Gastrocnemius medialis (tissue), 4 donors: ENCODE measurements at regions of chr3 and their contacts with region 1.

Region 1: DNA sequence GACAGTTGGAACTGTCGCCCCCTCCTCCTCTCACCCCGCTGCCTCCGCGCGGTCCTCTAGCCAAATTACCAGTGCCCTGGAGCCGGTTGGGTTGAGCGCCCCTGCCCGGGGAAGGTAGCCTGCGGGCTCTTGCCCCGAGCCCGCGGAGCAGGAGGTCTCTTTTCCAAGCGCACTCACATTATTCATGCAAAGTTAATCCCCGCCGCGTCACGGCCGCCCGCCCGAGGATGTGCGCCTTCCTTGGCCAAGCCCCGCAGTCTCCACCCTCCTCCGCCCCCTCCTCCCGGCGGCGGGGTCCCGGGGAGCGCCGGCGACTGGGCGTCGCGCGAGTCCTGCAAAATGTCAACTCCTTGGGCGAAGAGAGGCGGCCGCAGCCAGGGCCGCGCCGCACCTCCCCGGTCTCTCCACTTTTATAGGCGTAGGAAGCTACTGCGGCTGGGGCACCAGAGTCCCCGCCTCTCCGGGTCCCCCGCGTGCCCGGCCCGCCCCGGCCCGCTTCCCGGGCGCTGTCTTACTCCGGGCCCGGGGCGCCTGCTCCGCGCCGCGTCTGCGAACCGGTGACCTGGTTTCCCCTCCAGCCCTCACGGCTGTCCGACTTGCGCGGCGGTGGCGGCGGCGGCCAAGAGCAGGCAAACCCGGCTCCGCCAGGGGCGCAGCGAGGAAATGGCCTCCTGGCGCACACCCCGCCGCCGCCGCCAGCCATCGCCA is at the start of gene THRB:
- DNase-seq: peak; percentile 76 to 81
- ATAC-seq: peak; percentile 41 to 46
- H3K4me3 ChIP-seq: peak within 1 kb of the TSS; percentile 65 to 89 (median 82)
- H3K27ac ChIP-seq: peak within 1 kb of the TSS; percentile 94 to 99 (median 97)
- H3K4me1 ChIP-seq: peaks cover 31 to 40% of the 10 kb centered on the region in 2 donors
- H3K27me3 ChIP-seq: no peaks in the 10 kb centered on the region
- CTCF ChIP-seq: peak; percentile 17 to 61 (median 50)
- POLR2A ChIP-seq: peak; percentile 75 to 79
- total RNA-seq, gene THRB: 20.1 to 60.0 (median 25.3) TPM

Region 2: GRCh38 chr3:24137958-24138875 is 356.6 kb before region 1 on chr3:
- in situ Hi-C with region 1: no loop called
- intact Hi-C with region 1: loop called (anchors 10 kb)
- DNase-seq: peak in 1 of 2 donors; percentile 54
- ATAC-seq: peak; percentile 20 to 66
- H3K4me3 ChIP-seq: no peak overlapping the region
- H3K27ac ChIP-seq: peak overlapping the region; percentile 64 to 77 (median 72)
- H3K4me1 ChIP-seq: peaks cover 35 to 42% of the 10 kb centered on the region in 2 donors
- H3K27me3 ChIP-seq: no peaks in the 10 kb centered on the region
- CTCF ChIP-seq: no peak
- POLR2A ChIP-seq: no peak

Region 3: DNA sequence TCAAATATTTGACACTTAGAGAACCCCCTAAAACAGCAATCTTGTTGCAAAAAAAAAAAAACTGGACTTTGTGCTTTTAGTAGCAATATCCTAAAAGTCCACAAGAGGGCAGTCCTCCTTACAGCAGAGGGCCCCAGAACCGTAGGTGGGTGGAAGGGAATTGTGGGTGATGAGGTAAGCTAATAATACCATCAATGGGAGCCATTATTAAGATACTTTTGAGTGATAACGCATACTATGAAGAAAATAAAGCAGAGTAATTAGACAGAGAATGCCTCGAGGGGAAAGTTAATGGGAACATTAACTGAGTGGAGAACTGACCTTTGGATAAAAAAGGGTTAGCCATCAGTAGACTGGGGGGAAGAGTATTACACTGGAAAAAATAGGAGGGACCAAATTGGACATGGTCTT is 230.0 kb before region 1 on chr3:
- in situ Hi-C with region 1: loop called in 2 of 4 experiments (anchors 10 kb)
- intact Hi-C with region 1: loop called (anchors 1 kb)
- DNase-seq: no peak
- ATAC-seq: no peak
- H3K4me3 ChIP-seq: no peak overlapping the region
- H3K27ac ChIP-seq: no peak overlapping the region
- H3K4me1 ChIP-seq: peaks cover 22 to 57% of the 10 kb centered on the region in 2 donors
- H3K27me3 ChIP-seq: no peaks in the 10 kb centered on the region
- CTCF ChIP-seq: peak; percentile 64 to 79 (median 75)
- POLR2A ChIP-seq: no peak

Region 4: GRCh38 chr3:24365194-24365612 is 129.6 kb before region 1 on chr3:
- in situ Hi-C with region 1: loop called in 1 of 4 experiments (anchors 10 kb)
- intact Hi-C with region 1: loop called (anchors 5 kb)
- DNase-seq: peak; percentile 46 to 52
- ATAC-seq: peak; percentile 91 to 93
- H3K4me3 ChIP-seq: no peak overlapping the region
- H3K27ac ChIP-seq: peak overlapping the region; percentile 44 to 76 (median 64)
- H3K4me1 ChIP-seq: peaks cover 30 to 32% of the 10 kb centered on the region in 2 donors
- H3K27me3 ChIP-seq: no peaks in the 10 kb centered on the region
- CTCF ChIP-seq: peak in 2 of 5 experiments; percentile 30 to 38
- POLR2A ChIP-seq: no peak